Activated CD8-positive, alpha-beta T cell treated with anti-CD3 and anti-CD28 coated beads, Interleukin-2, amount 10 ng/mL, durations not matched to agents 7 days and 5 days (primary cell): ENCODE measurements at regions of chr11 and their contacts with region 1.

Region 1: GRCh38 chr11:17384002-17384511 is 4.4 kb downstream of the KCNJ11 start:
- DNase-seq: peak; percentile 88
- ATAC-seq: peak; percentile 54
- H3K4me3 Mint-ChIP-seq: no peak overlapping the region
- H3K27ac Mint-ChIP-seq: no peak overlapping the region
- H3K4me1 Mint-ChIP-seq: peaks cover 10% of the 10 kb centered on the region
- H3K27me3 Mint-ChIP-seq: peaks cover 3% of the 10 kb centered on the region

Region 2: DNA sequence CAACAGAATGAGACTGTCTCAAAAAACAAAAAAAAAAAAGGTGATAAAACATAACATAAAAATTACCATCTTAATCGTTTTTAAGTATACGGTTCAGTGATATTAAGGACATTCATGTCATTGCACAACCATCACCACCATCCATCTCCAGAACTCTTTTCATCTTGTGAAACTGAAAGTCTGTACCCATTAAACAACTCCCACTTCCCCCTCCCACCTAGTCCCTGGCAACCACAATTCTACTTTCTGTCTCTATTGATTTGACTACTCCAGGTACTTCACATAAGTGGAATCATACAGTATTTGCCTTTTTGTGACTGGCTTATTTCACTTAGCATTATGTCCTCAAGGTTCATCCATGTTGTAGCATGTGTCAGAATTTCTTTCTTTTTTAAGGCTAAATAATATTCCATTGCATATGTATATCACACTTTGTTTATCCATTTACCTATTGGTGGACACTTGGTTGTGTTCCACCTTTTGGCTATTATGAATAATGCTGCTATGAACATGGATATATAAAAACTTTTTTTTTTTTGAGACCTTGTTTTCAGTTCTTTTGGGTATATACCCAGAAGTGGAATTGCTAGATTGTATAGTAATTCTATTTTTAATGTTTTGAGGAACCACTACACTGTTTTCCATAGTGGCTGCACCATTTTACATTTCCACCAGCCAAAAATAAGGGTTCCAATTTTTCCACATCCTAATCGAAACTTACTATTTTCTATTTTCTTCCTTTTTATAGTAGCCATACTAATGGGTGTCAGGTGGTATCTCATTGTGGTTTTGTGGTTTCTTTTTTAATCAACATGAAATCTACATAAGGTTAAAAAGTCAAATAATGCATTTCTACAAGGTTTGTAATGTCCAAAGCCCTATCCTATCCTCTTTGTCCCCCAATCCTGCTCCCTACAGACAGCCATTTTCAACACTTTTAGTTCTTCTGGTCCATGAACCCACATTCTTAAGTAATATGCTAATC is 152.9 kb before region 1 on chr11:
- CTCF ChIA-PET with region 1: interaction called, 28 read pairs
- POLR2A ChIA-PET with region 1: no interaction called
- DNase-seq: peak; percentile 68
- ATAC-seq: peak; percentile 94
- H3K4me3 Mint-ChIP-seq: peak overlapping the region; percentile 50
- H3K27ac Mint-ChIP-seq: peak overlapping the region; percentile 39
- H3K4me1 Mint-ChIP-seq: peaks cover 18% of the 10 kb centered on the region
- H3K27me3 Mint-ChIP-seq: peaks cover 8% of the 10 kb centered on the region

Region 3: DNA sequence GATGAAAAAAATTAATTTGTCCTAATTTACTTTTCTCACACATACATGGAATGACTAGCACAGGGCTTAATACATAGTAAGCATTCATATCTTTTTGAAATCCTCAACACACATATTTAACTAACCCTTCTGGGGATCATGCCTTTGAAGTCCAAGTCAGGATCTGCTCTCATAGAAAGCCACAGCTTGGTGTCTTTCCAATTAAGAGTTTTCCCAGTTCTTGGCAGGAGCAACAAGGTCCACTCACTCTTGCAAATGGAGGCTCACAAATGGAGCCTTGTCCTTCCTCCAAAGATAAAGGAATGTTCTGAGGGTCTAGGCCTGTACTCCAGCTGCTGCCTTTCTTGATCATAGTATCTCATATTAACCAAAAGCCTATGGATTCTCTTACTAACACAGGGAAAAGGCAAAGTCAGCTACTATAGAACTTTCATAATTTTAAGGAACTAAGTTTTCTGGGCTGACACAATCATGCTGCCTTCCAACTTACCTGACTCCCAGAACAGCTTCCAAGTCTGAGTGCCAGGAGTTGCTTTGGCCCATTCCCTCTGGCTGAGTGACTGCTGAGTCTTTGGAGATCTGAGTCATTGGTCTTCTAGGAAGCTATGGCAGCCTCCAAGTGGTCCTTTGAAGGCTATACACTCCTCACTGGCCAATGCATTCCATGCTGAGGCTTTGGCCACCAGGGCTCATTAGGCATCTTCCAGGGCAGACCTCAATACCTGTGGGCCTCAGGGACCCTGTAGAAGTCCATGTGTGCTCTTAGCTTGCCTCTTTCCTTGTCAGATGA is 133.3 kb before region 1 on chr11:
- CTCF ChIA-PET with region 1: no interaction called
- POLR2A ChIA-PET with region 1: no interaction called
- DNase-seq: no peak
- ATAC-seq: no peak
- H3K4me3 Mint-ChIP-seq: no peak overlapping the region
- H3K27ac Mint-ChIP-seq: no peak overlapping the region
- H3K4me1 Mint-ChIP-seq: no peaks in the 10 kb centered on the region
- H3K27me3 Mint-ChIP-seq: peaks cover 16% of the 10 kb centered on the region

Region 4: GRCh38 chr11:17397311-17398002 is 13.4 kb after region 1 on chr11:
- CTCF ChIA-PET with region 1: interaction called, 11 read pairs
- POLR2A ChIA-PET with region 1: no interaction called
- DNase-seq: no peak
- ATAC-seq: no peak
- H3K4me3 Mint-ChIP-seq: no peak overlapping the region
- H3K27ac Mint-ChIP-seq: no peak overlapping the region
- H3K4me1 Mint-ChIP-seq: peaks cover 5% of the 10 kb centered on the region
- H3K27me3 Mint-ChIP-seq: peaks cover 4% of the 10 kb centered on the region

Region 5: DNA sequence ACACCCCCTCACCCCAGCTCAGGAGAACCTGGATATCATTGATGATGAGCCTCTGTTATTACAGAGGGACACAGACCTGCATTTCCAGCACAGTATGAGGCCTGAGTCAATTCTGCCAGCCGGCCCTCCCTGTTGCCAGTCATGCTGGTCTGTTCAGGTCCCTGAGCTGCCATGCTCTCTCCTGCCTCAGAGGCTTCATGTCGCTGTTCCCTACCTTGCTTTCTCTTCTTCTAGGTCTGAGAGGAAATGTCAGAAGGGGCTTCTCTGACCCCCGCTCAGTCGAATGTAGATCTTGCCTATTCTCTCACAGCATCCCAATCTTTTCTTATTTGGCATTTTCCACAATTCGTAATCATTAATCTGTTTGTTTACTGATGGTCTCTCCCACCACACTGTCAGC is 114.4 kb after region 1 on chr11:
- CTCF ChIA-PET with region 1: interaction called, 101 read pairs
- POLR2A ChIA-PET with region 1: no interaction called
- DNase-seq: no peak
- ATAC-seq: no peak
- H3K4me3 Mint-ChIP-seq: no peak overlapping the region
- H3K27ac Mint-ChIP-seq: no peak overlapping the region
- H3K4me1 Mint-ChIP-seq: no peaks in the 10 kb centered on the region
- H3K27me3 Mint-ChIP-seq: peaks cover 6% of the 10 kb centered on the region

Region 6: GRCh38 chr11:17513853-17514252 is 129.8 kb after region 1 on chr11:
- CTCF ChIA-PET with region 1: interaction called, 101 read pairs
- POLR2A ChIA-PET with region 1: no interaction called
- DNase-seq: no peak
- ATAC-seq: no peak
- H3K4me3 Mint-ChIP-seq: no peak overlapping the region
- H3K27ac Mint-ChIP-seq: no peak overlapping the region
- H3K4me1 Mint-ChIP-seq: no peaks in the 10 kb centered on the region
- H3K27me3 Mint-ChIP-seq: peaks cover 23% of the 10 kb centered on the region